Motor neuron (in vitro differentiated cells): ENCODE measurements at regions of chr18 and their contacts with region 1.

Region 1: DNA sequence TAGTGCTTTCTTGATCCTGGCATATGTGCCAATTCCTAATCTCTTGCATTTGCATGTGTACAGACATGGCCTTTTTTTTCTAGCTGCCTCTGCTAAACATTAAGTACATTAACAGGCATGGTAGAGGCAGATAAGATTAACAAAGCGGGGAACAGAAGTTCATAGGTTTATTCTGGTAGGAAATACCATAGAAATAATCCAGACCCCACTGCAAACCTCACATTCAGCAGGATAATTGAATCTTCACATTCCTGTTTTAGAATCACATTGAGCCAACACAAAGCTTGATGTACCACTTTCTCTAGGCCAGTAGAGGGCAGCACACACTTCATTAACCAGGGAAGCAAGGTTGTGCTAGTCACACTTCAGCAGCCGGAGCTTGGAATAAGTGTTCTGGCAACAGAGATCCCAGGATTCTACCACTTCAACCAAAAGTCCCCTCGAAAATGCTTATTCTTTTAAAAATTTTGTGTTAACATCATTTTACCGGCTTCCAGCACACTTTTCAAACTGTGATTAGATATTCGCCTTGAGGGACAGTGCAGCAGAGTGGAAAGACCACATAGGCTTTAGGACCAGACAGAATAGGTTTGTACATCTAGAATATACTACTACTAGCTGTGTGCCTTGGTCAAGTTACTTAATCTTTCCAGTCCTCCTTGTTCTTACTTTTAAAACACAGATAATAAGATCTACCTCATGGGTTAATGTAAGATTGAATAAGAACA is 420.2 kb upstream of the CHST9 start:
- ATAC-seq: peak; percentile 85 to 99 (median 94)
- H3K4me3 ChIP-seq: no peak overlapping the region
- H3K27ac ChIP-seq: no peak overlapping the region
- H3K4me1 ChIP-seq: peaks cover 0 to 2% of the 10 kb centered on the region in 2 donors

Region 2: DNA sequence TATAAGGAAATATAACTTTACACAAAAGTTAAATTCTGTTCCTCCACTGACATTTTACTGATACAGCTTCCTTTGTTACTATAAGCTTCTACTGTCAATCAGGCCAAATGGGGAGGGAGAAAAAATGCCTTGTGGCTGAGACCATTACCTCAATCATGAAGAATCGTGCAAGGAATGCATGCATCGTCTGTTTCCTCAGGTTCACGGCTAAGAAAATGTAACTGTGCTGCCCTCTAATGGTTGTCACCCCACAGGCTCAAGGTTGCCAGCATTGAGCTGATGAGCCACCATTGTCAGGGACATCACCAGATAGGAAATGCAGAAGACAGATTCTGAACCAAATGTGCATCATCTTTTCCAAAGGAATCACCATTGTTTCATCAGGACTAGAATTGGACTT is 144.7 kb after region 1 on chr18:
- in situ Hi-C with region 1: loop called in 2 of 9 experiments (anchors 10 kb)
- ATAC-seq: peak; percentile 50 to 97 (median 72)
- H3K4me3 ChIP-seq: no peak overlapping the region
- H3K27ac ChIP-seq: no peak overlapping the region
- H3K4me1 ChIP-seq: peaks cover 5 to 9% of the 10 kb centered on the region in 2 donors